H1 (cell line): ENCODE measurements at regions of chr15 and their contacts with region 1.

Region 1: GRCh38 chr15:64067564-64068030 is 21.3 kb upstream of the DAPK2 start:
- DNase-seq: peak; percentile 25 to 93
- H3K4me3 ChIP-seq: no peak overlapping the region
- H3K27ac ChIP-seq: no peak overlapping the region
- H3K4me1 ChIP-seq: peaks cover 0 to 1% (median 0%) of the 10 kb centered on the region in 4 experiments; a peak in 2 of 7 replicates
- H3K27me3 ChIP-seq: no peaks in the 10 kb centered on the region
- CTCF ChIP-seq: peak in 2 of 3 experiments; percentile 73 to 88; a peak in 3 of 4 replicates
- EP300 ChIP-seq: no peak
- POLR2A ChIP-seq: no peak
- RAD21 ChIP-seq: peak; percentile 95 to 96

Region 2: DNA sequence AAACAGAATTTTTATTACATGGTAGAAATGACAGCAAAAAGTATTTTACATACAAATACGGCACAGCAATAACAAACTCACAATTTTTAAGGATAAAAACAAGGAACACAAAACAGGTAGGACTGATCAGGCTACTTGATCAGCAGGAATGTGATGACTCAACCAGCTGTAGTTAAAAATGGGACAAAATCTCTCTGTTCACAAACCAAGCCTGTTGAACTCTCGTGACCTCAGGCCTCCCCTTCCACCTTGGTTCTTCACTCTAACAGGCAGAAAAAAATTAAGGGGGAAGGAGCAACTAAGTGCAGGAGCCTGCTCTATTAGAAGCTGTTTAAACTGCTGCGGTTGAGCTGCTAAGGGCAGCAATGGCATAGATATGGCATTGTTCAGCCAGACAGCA is 451.7 kb before region 1 on chr15:
- CTCF ChIA-PET with region 1: interaction called, 37 read pairs
- POLR2A ChIA-PET with region 1: no interaction called
- DNase-seq: no peak
- H3K4me3 ChIP-seq: no peak overlapping the region
- H3K27ac ChIP-seq: no peak overlapping the region
- H3K4me1 ChIP-seq: no peaks in the 10 kb centered on the region
- H3K27me3 ChIP-seq: no peaks in the 10 kb centered on the region
- CTCF ChIP-seq: no peak
- EP300 ChIP-seq: no peak
- POLR2A ChIP-seq: no peak
- RAD21 ChIP-seq: no peak

Region 3: GRCh38 chr15:63905558-63906265 is 161.9 kb before region 1 on chr15:
- CTCF ChIA-PET with region 1: interaction called, 10 read pairs
- POLR2A ChIA-PET with region 1: no interaction called
- DNase-seq: no peak
- H3K4me3 ChIP-seq: no peak overlapping the region
- H3K27ac ChIP-seq: no peak overlapping the region
- H3K4me1 ChIP-seq: peaks cover 0 to 2% (median 0%) of the 10 kb centered on the region in 4 experiments; a peak in 2 of 7 replicates
- H3K27me3 ChIP-seq: no peaks in the 10 kb centered on the region
- CTCF ChIP-seq: no peak
- EP300 ChIP-seq: no peak
- POLR2A ChIP-seq: no peak
- RAD21 ChIP-seq: no peak

Region 4: GRCh38 chr15:64016732-64017588 is 50.6 kb before region 1 on chr15:
- CTCF ChIA-PET with region 1: no interaction called
- POLR2A ChIA-PET with region 1: no interaction called
- DNase-seq: no peak
- H3K4me3 ChIP-seq: no peak overlapping the region
- H3K27ac ChIP-seq: no peak overlapping the region
- H3K4me1 ChIP-seq: no peaks in the 10 kb centered on the region
- H3K27me3 ChIP-seq: no peaks in the 10 kb centered on the region
- CTCF ChIP-seq: no peak
- EP300 ChIP-seq: no peak
- POLR2A ChIP-seq: no peak
- RAD21 ChIP-seq: no peak

Region 5: DNA sequence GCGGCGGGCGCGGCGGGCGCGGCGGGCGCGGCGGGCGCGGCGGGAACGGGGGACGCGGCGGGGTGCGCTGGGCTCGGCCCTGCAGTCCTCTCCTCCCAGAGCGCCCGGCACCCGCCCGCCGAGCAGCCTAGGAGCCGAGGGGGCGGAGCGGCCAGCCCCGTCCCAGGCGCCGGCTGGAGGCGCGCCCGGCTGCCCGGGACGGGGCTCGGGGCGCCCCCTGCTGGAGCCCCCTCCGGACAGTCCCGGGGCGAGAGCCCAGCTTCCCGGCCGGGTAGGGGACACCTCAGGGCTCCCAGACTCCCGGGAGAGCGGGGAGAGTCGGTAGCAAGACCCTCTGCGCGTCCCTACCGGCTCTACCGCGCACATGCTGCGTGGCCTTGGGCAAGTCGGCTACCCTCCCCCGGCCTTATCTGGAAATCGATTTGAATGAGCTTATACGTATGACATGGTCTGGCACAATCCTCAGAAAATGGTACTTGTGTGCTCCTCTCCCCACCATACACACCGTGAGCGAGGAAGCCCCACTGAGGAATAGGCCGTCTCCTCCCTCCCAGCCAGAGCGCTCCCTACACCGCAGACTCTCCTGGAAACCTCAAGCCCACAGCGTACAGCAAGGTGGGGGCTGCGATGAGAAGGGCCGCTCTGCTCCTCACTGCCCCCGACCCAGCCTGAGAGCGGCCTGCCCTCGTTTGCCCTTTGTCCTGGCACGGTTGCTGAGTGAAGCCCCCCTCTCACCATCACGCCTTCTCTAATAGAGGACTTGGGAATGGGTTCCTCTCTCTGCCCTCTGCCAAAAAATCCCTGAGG is 21.0 kb before region 1 on chr15 and contains the start of gene DAPK2:
- CTCF ChIA-PET with region 1: interaction called, 62 read pairs
- POLR2A ChIA-PET with region 1: interaction called, 4 read pairs
- DNase-seq: peak in 1 of 2 experiments; percentile 86
- H3K4me3 ChIP-seq: peak within 1 kb of the TSS; percentile 41 to 70 (median 48)
- H3K27ac ChIP-seq: no peak within 1 kb of the TSS
- H3K4me1 ChIP-seq: peaks cover 0 to 15% (median 5%) of the 10 kb centered on the region in 4 experiments; a peak in 4 of 7 replicates
- H3K27me3 ChIP-seq: peaks cover 3 to 31% (median 19%) of the 10 kb centered on the region in 4 experiments; a peak in 6 of 7 replicates
- CTCF ChIP-seq: peak; percentile 53 to 78 (median 58)
- EP300 ChIP-seq: no peak
- POLR2A ChIP-seq: no peak
- RAD21 ChIP-seq: peak; percentile 46 to 75
- total RNA-seq, gene DAPK2: 2.2 and 2.9 TPM in 2 replicates